Adrenal gland (tissue), 19 donors: ENCODE measurements at regions of chr18 and their contacts with region 1.

Region 1: GRCh38 chr18:30527226-30527625 is 515.3 kb downstream of the DSC3 start:
- DNase-seq: no peak
- H3K4me3 ChIP-seq: no peak overlapping the region
- H3K27ac ChIP-seq: no peak overlapping the region
- H3K4me1 ChIP-seq: no peaks in the 10 kb centered on the region
- H3K27me3 ChIP-seq: no peaks in the 10 kb centered on the region
- CTCF ChIP-seq: no peak
- POLR2A ChIP-seq: no peak

Region 2: DNA sequence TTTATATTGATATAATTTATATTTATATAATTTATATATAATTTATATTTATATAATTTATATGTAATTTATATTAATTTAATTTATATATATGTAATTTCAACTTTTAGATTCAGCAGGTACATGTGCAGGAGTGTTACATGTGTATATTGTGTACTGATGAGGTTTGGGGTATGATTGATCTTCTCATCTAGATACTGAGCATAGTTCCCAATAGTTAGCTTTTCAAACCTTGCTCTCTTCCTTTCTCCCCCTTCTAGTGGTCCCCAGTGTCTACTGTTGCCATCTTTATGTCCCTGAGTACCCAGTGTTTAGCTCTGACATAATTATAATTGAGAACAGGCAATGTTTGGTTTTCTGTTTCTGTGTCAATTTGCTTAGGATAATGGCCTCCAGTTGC is 1015.0 kb before region 1 on chr18:
- intact Hi-C with region 1: no loop called
- DNase-seq: no peak
- H3K4me3 ChIP-seq: no peak overlapping the region
- H3K27ac ChIP-seq: no peak overlapping the region
- H3K4me1 ChIP-seq: no peaks in the 10 kb centered on the region
- H3K27me3 ChIP-seq: no peaks in the 10 kb centered on the region
- CTCF ChIP-seq: no peak
- POLR2A ChIP-seq: no peak

Region 3: DNA sequence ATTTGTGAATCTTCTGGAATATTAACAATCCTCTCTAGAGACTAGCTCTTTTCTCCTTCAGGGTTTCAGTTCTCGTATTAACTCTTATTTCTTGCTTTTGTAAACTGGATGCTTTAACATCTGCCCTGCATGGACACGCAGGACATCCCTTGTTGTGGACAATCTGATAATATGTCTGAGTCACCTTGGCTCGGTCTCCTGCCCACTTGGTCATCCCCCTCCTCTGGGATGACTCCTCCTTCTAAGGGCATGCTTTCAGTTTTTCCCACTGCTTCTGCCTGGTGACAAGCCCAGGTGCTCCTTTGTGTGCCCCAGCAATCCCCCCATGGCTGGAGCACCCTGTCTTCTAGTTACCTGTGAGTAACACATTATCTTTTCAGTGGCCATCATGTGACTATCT is 54.9 kb after region 1 on chr18:
- intact Hi-C with region 1: loop called in 1 of 2 experiments (anchors 10 kb)
- DNase-seq: no peak
- H3K4me3 ChIP-seq: no peak overlapping the region
- H3K27ac ChIP-seq: no peak overlapping the region
- H3K4me1 ChIP-seq: no peaks in the 10 kb centered on the region
- H3K27me3 ChIP-seq: no peaks in the 10 kb centered on the region
- CTCF ChIP-seq: no peak
- POLR2A ChIP-seq: no peak